Activated CD4-positive, alpha-beta T cell treated with anti-CD3 and anti-CD28 coated beads for 36 hours (primary cell): ENCODE measurements at regions of chr14 and their contacts with region 1.

Region 1: GRCh38 chr14:70887207-70887681 is 20.0 kb upstream of the PCNX1 start:
- DNase-seq: no peak
- ATAC-seq: peak; percentile 26
- H3K4me3 Mint-ChIP-seq: peak overlapping the region; percentile 55
- H3K27ac Mint-ChIP-seq: peak overlapping the region; percentile 96
- H3K4me1 Mint-ChIP-seq: peaks cover 80% of the 10 kb centered on the region
- H3K27me3 Mint-ChIP-seq: no peaks in the 10 kb centered on the region

Region 2: GRCh38 chr14:70655110-70655826 is 232.0 kb before region 1 on chr14:
- CTCF ChIA-PET with region 1: no interaction called
- POLR2A ChIA-PET with region 1: interaction called, 4 read pairs
- intact Hi-C with region 1: loop called (anchors 5 to 10 kb)
- DNase-seq: peak; percentile 82
- ATAC-seq: peak; percentile 80
- H3K4me3 Mint-ChIP-seq: peak overlapping the region; percentile 76
- H3K27ac Mint-ChIP-seq: peak overlapping the region; percentile 99
- H3K4me1 Mint-ChIP-seq: peaks cover 90% of the 10 kb centered on the region
- H3K27me3 Mint-ChIP-seq: no peaks in the 10 kb centered on the region

Region 3: DNA sequence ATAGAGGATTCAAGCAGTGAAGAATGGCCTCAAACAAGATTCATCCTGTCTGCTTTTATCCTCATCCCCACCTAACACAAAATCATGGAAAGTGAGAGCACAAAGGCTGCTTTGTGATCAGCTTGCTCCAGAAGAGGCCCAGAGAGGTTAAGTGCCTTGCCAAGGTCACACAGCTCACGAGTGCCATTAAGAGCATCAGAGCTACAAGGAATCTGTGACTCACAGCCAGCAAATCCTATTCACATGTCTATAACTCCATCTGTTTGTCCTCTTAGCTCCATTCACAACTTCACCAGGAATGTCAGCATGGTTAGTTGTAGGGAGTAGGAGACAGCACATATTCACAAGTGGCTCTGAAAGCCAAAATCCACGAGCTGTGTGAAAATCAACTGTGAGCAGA is 165.7 kb before region 1 on chr14:
- CTCF ChIA-PET with region 1: no interaction called
- POLR2A ChIA-PET with region 1: no interaction called
- intact Hi-C with region 1: no loop called
- DNase-seq: no peak
- ATAC-seq: no peak
- H3K4me3 Mint-ChIP-seq: no peak overlapping the region
- H3K27ac Mint-ChIP-seq: no peak overlapping the region
- H3K4me1 Mint-ChIP-seq: no peaks in the 10 kb centered on the region
- H3K27me3 Mint-ChIP-seq: no peaks in the 10 kb centered on the region

Region 4: GRCh38 chr14:70816525-70816924 is 70.7 kb before region 1 on chr14:
- CTCF ChIA-PET with region 1: interaction called, 19 read pairs
- POLR2A ChIA-PET with region 1: no interaction called
- intact Hi-C with region 1: no loop called
- DNase-seq: no peak
- ATAC-seq: no peak
- H3K4me3 Mint-ChIP-seq: no peak overlapping the region
- H3K27ac Mint-ChIP-seq: no peak overlapping the region
- H3K4me1 Mint-ChIP-seq: peaks cover 10% of the 10 kb centered on the region
- H3K27me3 Mint-ChIP-seq: peaks cover 15% of the 10 kb centered on the region

Region 5: DNA sequence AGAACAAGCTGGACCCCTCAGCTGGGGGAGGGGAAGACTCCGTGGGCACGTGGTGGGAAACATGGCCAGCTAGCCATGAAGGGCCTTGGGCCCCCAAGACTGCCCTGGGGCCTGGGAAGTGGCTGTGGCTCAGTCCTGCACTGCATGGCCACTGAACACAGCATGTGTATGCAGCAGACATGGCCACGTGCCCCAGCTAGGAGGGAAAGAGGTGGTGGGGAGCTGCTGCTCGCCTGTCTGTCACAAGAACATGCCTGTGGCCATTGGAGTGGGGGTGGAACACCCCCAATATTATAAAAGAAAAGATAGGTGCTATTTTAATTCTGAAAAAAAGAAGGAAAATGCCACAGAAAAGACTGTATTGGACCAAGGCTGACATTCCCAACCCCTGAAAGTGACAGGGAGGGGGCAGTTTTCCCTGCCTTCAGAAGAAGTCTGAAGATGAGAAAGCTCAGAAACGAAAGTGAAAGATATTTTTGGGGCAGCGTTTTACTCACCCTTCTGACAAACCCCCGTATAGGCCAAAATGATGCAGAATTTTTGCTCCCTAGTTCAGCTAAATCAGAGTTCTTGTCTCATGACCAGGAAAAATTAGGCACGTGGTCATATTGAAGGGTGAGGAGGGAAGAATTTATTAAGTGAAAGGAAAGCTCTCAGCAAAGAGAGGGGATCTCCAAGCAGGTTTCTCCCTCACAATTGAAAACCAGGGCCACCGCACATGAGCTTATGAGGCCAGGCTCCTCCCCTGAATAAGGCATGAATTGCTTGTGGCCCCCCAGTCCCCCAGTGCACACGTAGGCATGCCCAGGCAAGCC is 15.2 kb before region 1 on chr14:
- CTCF ChIA-PET with region 1: interaction called, 4 read pairs
- POLR2A ChIA-PET with region 1: interaction called, 3 read pairs
- intact Hi-C with region 1: loop called in 1 of 2 experiments (anchors 1 kb)
- DNase-seq: no peak
- ATAC-seq: peak; percentile 79
- H3K4me3 Mint-ChIP-seq: peak overlapping the region; percentile 17
- H3K27ac Mint-ChIP-seq: peak overlapping the region; percentile 39
- H3K4me1 Mint-ChIP-seq: peaks cover 14% of the 10 kb centered on the region
- H3K27me3 Mint-ChIP-seq: no peaks in the 10 kb centered on the region

Region 6: DNA sequence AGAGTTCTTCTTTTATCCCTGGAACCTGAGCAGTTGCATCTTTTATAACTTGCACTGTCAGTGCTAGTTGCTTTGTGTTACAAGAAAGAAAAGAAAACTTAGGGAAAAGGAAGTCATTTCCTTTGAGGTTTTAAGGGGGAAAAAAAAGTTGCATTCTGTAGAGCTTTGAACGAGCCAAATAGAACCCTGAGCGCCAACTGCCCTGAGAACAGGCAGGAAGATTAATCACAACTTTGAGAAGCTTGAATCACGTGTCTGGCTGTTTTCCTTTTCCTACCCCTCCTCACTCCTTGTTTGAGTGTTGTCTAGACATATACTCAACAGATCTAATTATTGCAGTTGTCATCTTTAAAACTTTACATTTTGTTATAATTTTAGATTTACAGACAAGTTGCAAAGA is 32.5 kb after region 1 on chr14:
- CTCF ChIA-PET with region 1: interaction called, 4 read pairs
- POLR2A ChIA-PET with region 1: interaction called, 6 read pairs
- intact Hi-C with region 1: loop called (anchors 1 to 5 kb)
- DNase-seq: peak; percentile 38
- ATAC-seq: peak; percentile 35
- H3K4me3 Mint-ChIP-seq: peak overlapping the region; percentile 13
- H3K27ac Mint-ChIP-seq: peak overlapping the region; percentile 68
- H3K4me1 Mint-ChIP-seq: peaks cover 85% of the 10 kb centered on the region
- H3K27me3 Mint-ChIP-seq: no peaks in the 10 kb centered on the region

Region 7: GRCh38 chr14:71021347-71022014 is 134.2 kb after region 1 on chr14:
- CTCF ChIA-PET with region 1: no interaction called
- POLR2A ChIA-PET with region 1: no interaction called
- intact Hi-C with region 1: loop called (anchors 1 to 5 kb)
- DNase-seq: no peak
- ATAC-seq: peak; percentile 86
- H3K4me3 Mint-ChIP-seq: peak overlapping the region; percentile 4
- H3K27ac Mint-ChIP-seq: peak overlapping the region; percentile 68
- H3K4me1 Mint-ChIP-seq: peaks cover 33% of the 10 kb centered on the region
- H3K27me3 Mint-ChIP-seq: no peaks in the 10 kb centered on the region